Dendritic cell treated with granulocyte-macrophage colony-stimulating factor and Interleukin-4, amounts not matched to agents 40 ng/mL and 50 ng/mL, for 4 days (primary cell): ENCODE measurements at regions of chrX and their contacts with region 1.

Region 1: DNA sequence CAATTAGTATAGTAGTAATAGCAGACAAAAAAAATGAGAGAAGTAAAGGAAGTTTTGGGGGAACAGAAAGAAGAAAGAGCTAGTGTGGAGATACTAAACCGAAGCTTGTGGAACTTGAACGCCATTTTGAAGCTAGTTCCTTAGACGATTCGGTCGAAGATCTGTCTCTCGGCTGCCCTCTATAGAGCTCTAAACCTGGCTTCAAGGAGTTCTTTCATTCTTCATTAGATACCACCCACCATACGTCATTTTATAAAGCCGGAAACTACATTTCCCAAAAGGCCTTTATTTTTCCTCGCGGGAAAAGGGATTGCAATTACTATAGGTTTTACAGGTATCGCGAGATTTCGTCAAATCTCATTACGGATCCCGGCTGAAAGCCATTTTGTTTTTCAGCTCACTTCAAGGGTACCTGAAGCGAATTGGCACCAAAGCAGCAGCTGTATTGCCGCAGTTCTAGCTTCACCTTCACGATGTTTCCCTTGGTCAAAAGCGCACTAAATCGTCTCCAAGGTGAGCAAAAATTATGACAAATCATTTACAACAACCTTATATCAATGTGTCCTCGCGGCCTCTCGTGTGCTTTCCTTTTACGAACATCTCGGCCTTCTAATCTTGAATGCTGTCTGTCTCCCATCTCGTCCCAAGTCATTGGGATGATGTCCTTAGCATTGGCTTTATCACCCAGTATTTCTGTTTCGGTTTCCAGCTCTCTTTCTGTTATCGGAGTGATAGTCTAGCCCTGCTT is at the start of gene COX7B:
- H3K4me3 Mint-ChIP-seq: peak within 1 kb of the TSS; percentile 83
- H3K27ac Mint-ChIP-seq: peak within 1 kb of the TSS; percentile 94
- H3K4me1 Mint-ChIP-seq: peaks cover 8% of the 10 kb centered on the region
- H3K27me3 Mint-ChIP-seq: no peaks in the 10 kb centered on the region

Region 2: GRCh38 chrX:77785486-77786364 is 113.5 kb before region 1 on chrX and contains the start of gene ATRX:
- intact Hi-C with region 1: loop called (anchors 5 kb)
- H3K4me3 Mint-ChIP-seq: peak within 1 kb of the TSS; percentile 99
- H3K27ac Mint-ChIP-seq: peak within 1 kb of the TSS; percentile 99
- H3K4me1 Mint-ChIP-seq: no peaks in the 10 kb centered on the region
- H3K27me3 Mint-ChIP-seq: no peaks in the 10 kb centered on the region

Region 3: GRCh38 chrX:78103623-78104446 is 204.6 kb after region 1 on chrX and contains the start of gene PGK1:
- intact Hi-C with region 1: loop called (anchors 2 kb)
- H3K4me3 Mint-ChIP-seq: peak within 1 kb of the TSS; percentile 91
- H3K27ac Mint-ChIP-seq: peak within 1 kb of the TSS; percentile 94
- H3K4me1 Mint-ChIP-seq: peaks cover 29% of the 10 kb centered on the region
- H3K27me3 Mint-ChIP-seq: no peaks in the 10 kb centered on the region